ENCODE measurements at regions of chr5 and their contacts with region 1.

Region 1: DNA sequence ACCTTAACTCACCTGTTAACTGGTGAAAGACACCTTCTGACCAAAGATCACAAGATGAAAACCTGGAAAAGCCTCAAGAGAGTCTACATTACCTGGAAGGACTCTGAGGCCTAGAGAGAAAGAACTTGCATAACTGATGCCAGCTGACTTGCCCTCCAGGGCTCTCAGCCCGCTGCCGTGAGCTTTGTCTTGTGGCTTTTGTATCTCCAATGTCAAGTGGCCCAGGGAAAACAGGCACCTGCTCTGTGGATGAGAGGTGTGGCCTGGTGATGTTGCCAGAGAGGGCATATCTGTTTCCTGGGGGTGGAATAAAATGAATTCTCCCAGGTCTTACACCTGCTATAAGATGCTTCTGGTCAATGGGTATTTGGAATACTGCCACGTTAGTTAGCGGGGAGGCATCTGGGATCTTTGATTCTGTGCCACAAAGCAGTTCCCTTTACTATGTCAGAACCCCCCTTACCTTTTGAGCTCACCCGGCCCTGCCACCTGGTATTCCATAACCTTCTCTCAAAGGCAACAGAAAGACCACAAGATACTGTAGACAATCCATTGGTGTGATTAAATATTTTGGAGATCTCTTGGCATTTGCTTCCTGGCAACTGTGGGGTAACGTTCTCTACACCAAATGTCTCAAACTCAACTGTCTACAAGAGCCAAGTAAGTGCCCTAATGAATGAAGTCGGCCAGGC is 54.9 kb upstream of the N4BP3 start:
- DNase-seq: no peak
- ATAC-seq: no peak
- H3K4me3 ChIP-seq: no peak overlapping the region
- H3K4me3 Mint-ChIP-seq: no peak overlapping the region
- H3K27ac ChIP-seq: no peak overlapping the region
- H3K27ac Mint-ChIP-seq: no peak overlapping the region
- H3K4me1 ChIP-seq: peaks cover 5% of the 10 kb centered on the region
- H3K4me1 Mint-ChIP-seq: peaks cover 5% of the 10 kb centered on the region
- H3K27me3 ChIP-seq: no peaks in the 10 kb centered on the region
- H3K27me3 Mint-ChIP-seq: no peaks in the 10 kb centered on the region
- CTCF ChIP-seq: no peak

Region 2: DNA sequence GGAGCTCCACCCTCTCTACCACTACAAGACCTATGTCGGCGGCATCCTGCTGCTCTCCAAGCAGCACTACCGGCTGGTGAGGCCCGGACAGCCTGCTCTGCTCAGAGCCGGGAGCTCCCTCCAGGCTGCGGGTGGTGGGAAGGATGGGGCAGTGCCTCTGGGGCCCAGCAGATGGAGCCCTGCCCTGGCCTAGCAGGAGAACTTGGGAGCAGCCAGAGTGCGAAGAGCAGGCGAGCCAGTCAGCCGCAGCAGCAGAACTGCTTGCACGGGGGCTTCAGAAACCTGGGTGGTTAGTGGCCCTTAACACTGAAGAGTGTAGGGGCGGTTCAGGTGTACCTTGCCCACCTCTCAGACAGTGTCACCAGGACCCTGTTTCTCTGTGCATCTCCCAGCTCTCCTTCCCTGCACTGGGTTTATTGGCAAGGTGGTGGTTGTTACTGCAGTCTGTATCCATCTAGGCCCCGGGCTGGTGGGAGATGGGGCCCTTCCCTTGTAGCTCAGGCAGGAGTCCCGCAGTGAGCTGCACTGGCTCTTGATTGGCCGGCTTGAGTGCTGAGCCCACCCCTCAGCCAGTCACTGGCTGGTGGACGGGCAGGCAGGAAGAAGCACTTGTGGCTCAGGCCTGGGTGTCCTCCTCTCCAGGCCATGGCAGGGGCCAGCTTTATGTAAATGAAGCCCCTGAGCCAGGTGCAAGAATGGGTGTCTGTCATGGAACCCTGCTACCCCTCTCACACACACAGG is 450.8 kb before region 1 on chr5:
- CTCF ChIA-PET with region 1: no interaction called
- POLR2A ChIA-PET with region 1: no interaction called
- intact Hi-C with region 1: loop called in 1 of 2 experiments (anchors 1 kb)
- DNase-seq: peak; percentile 28 to 69 (median 59)
- ATAC-seq: peak; percentile 89
- H3K4me3 ChIP-seq: no peak overlapping the region
- H3K4me3 Mint-ChIP-seq: no peak overlapping the region
- H3K27ac ChIP-seq: no peak overlapping the region
- H3K27ac Mint-ChIP-seq: peak overlapping the region; percentile 52
- H3K4me1 ChIP-seq: peaks cover 9% of the 10 kb centered on the region
- H3K4me1 Mint-ChIP-seq: peaks cover 9% of the 10 kb centered on the region
- H3K27me3 ChIP-seq: no peaks in the 10 kb centered on the region
- H3K27me3 Mint-ChIP-seq: no peaks in the 10 kb centered on the region
- CTCF ChIP-seq: peak; percentile 54

Region 3: DNA sequence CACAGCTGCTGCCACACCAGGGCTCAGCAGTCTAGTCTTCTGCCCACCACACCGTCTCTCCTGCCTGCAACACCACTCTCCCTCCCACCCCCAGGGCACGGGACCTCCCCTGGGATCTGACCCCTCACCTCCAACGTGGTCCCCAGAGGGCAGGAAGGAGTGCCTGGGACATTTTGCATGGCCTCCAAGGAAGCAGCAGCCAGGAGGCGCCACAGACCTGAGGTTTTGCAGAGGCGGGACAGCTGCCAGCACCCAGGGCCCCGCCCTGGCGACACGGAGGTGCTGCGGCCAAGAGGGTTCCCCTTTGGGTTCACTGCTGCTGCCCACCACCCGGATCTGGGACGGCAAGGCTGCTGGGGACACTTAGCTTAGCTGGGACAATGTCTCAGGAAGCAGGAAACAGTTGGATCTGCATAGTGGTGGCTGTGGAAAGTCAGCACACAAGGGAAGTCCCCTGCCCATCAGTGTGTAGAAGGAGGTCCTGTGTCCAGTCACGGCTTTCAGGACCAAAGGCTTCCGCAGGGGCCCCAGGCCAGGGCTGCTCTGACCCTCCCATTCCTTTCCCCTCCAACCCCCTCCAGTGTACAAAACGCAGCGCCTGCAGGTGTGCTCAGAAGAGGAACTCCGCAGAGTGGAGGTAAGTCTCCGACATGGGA is 76.3 kb before region 1 on chr5:
- CTCF ChIA-PET with region 1: interaction called, 4 read pairs
- POLR2A ChIA-PET with region 1: no interaction called
- intact Hi-C with region 1: loop called in 1 of 2 experiments (anchors 5 kb)
- DNase-seq: peak in 5 of 9 experiments; percentile 15 to 47 (median 27)
- ATAC-seq: peak; percentile 40
- H3K4me3 ChIP-seq: no peak overlapping the region
- H3K4me3 Mint-ChIP-seq: no peak overlapping the region
- H3K27ac ChIP-seq: no peak overlapping the region
- H3K27ac Mint-ChIP-seq: no peak overlapping the region
- H3K4me1 ChIP-seq: peaks cover 14% of the 10 kb centered on the region
- H3K4me1 Mint-ChIP-seq: peaks cover 9% of the 10 kb centered on the region
- H3K27me3 ChIP-seq: peaks cover 24 to 32% of the 10 kb centered on the region in 2 experiments
- H3K27me3 Mint-ChIP-seq: peaks cover 48% of the 10 kb centered on the region
- CTCF ChIP-seq: no peak

Measured in CD8-positive, alpha-beta T cell (primary cell).